PC-9 (cell line): ENCODE measurements at regions of chr6 and their contacts with region 1.

Region 1: DNA sequence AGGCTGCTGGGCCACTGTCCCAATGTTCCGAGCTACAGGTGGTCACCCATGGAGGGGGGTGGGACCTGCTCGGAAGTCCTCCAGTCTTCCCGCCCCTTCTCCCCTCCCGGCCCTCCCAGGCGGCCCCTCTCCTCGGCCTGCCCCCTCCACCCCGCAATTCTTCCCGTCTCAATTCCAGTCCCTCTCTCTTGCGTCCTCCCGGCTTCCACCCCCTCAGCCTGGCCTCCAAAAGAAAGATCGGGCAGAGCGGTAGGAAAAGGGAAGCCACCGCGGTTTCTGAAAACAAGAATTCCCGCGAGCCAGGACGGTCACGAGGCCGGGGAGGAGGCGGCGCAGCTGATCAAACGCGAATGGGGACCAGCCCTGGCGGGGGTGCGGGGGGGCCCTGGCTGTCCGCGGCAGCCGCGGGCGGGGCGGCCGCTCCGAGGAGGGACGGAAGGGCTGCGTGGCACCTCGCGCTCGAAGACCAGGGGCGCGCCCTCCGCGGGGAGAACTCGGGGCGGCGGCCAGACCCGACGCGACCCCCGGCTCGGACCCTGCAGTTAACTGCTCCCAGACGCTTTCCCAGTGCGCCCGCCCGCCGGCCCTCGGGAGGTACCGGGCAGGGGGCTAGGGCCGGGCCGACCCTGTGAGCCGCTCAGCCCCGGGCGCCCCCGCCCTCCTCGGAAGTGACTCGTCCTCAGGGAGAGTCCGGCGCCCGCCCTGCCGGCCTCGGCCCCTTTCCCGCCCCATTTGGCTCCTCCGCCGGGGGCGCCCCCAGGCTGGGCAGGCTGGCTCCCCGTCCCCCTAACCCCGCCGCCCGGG is 994 bp downstream of the PXDC1 start:
- DNase-seq: peak; percentile 37 to 74
- H3K4me3 ChIP-seq: peak overlapping the region; percentile 69
- H3K27ac ChIP-seq: 0 out of 2 replicates have a peak overlapping the region, but pooled peaks have one; percentile 26
- H3K4me1 ChIP-seq: 0 out of 2 replicates have a peak, but pooled peaks cover 5% of the 10 kb centered on the region
- H3K27me3 ChIP-seq: no peaks in the 10 kb centered on the region
- CTCF ChIP-seq: no peak

Region 2: GRCh38 chr6:3808759-3809514 is 58.4 kb after region 1 on chr6:
- CTCF ChIA-PET with region 1: no interaction called
- POLR2A ChIA-PET with region 1: interaction called, 8 read pairs
- intact Hi-C with region 1: loop called (anchors 1 kb)
- DNase-seq: peak; percentile 83
- H3K4me3 ChIP-seq: no peak overlapping the region
- H3K27ac ChIP-seq: peak overlapping the region; percentile 27; the same call in 1 of the 2 replicates
- H3K4me1 ChIP-seq: peaks cover 33% of the 10 kb centered on the region
- H3K27me3 ChIP-seq: no peaks in the 10 kb centered on the region
- CTCF ChIP-seq: no peak